ENCODE measurements at regions of chr7 and their contacts with region 1.

Region 1: DNA sequence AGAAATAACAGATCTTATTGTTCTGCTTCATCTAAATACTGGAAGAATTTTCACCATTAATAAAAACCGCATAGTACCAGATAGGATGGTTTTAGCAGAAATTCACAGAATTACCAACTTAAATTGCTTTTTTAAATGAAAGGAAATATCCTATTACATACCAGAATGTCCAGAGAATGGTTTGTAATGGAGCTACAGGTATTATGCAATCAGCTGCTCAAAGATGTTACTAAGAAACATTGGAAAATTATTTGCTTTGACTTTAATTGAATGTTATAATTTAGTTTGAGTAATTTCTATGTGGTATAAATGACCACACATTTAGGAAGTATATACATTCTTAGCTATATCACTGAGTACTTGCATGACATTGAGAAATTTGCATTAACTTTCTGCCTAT is 338.3 kb downstream of the ETV1 start:
- DNase-seq: no peak
- H3K4me3 ChIP-seq: no peak overlapping the region
- H3K27ac ChIP-seq: no peak overlapping the region
- H3K4me1 ChIP-seq: no peaks in the 10 kb centered on the region
- H3K27me3 ChIP-seq: no peaks in the 10 kb centered on the region
- CTCF ChIP-seq: no peak
- EP300 ChIP-seq: no peak
- POLR2A ChIP-seq: no peak

Region 2: DNA sequence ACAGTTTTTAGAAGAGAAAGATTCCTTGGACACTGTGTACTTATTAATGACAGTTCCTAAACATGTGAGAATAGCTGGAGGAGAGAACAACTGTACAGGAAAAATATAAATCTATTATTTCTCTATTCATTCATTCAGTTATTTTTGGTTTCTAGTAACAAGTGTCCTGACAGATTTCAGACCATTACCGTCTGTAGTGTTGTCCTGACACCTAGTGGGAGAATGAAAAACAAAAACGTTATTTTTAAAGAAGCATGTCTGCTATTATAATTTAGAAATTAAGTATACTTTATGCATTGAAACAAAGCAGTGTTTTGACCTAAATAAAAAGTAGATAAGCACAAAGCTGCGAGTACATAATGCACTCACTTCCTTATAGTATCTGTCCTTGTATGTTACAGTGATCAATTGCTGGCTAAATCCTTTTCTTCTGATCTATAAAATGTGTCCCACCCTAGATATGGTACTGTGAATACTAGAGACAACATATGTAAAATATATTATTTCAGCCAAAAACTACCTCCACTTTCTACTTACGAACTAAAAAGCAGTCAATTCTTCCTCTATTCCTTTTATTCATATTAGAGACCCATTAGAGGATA is 388.1 kb before region 1 on chr7:
- in situ Hi-C with region 1: no loop called
- intact Hi-C with region 1: no loop called
- DNase-seq: no peak
- H3K4me3 ChIP-seq: no peak overlapping the region
- H3K27ac ChIP-seq: no peak overlapping the region
- H3K4me1 ChIP-seq: no peaks in the 10 kb centered on the region
- H3K27me3 ChIP-seq: no peaks in the 10 kb centered on the region
- CTCF ChIP-seq: peak; percentile 50 to 62 (median 58)
- EP300 ChIP-seq: no peak
- POLR2A ChIP-seq: no peak

Region 3: DNA sequence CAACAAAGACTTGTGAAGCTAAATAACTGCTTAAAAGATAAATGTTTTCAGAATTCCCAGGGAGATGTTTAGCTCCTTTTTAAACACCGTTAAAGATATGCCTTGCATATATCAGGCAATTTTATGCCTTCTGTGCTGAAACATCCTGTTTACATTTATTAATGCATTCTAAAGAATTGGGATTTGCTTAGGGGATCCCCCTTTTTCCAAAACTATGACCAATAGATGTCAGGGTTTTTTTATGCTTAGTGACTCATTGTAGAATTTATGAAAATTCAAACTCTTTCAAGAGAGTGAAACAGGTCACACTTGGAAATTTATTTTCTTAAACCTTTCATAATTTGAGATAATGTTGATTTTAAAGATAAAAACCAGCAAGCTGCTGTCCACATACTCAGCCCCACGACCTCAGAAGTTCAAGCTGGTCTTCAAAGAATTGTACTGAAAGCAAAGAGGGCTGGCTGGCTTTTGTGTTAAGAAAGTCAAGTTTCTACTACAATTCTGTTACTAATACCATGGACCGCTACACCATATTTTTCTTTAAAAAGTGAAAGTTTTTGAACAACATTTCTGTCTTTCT is 73.5 kb before region 1 on chr7:
- in situ Hi-C with region 1: no loop called
- intact Hi-C with region 1: loop called (anchors 2 kb)
- DNase-seq: no peak
- H3K4me3 ChIP-seq: no peak overlapping the region
- H3K27ac ChIP-seq: no peak overlapping the region
- H3K4me1 ChIP-seq: no peaks in the 10 kb centered on the region
- H3K27me3 ChIP-seq: no peaks in the 10 kb centered on the region
- CTCF ChIP-seq: no peak
- EP300 ChIP-seq: no peak
- POLR2A ChIP-seq: no peak

Region 4: GRCh38 chr7:14252458-14252857 is 601.3 kb after region 1 on chr7:
- in situ Hi-C with region 1: no loop called
- intact Hi-C with region 1: no loop called
- DNase-seq: no peak
- H3K4me3 ChIP-seq: no peak overlapping the region
- H3K27ac ChIP-seq: no peak overlapping the region
- H3K4me1 ChIP-seq: no peaks in the 10 kb centered on the region
- H3K27me3 ChIP-seq: no peaks in the 10 kb centered on the region
- CTCF ChIP-seq: no peak
- EP300 ChIP-seq: no peak
- POLR2A ChIP-seq: no peak

Measured in transverse colon (tissue), 4 donors.